Dendritic cell treated with granulocyte-macrophage colony-stimulating factor and Interleukin-4, amounts not matched to agents 40 ng/mL and 50 ng/mL, for 4 days (primary cell): ENCODE measurements at regions of chr1 and their contacts with region 1.

Region 1: DNA sequence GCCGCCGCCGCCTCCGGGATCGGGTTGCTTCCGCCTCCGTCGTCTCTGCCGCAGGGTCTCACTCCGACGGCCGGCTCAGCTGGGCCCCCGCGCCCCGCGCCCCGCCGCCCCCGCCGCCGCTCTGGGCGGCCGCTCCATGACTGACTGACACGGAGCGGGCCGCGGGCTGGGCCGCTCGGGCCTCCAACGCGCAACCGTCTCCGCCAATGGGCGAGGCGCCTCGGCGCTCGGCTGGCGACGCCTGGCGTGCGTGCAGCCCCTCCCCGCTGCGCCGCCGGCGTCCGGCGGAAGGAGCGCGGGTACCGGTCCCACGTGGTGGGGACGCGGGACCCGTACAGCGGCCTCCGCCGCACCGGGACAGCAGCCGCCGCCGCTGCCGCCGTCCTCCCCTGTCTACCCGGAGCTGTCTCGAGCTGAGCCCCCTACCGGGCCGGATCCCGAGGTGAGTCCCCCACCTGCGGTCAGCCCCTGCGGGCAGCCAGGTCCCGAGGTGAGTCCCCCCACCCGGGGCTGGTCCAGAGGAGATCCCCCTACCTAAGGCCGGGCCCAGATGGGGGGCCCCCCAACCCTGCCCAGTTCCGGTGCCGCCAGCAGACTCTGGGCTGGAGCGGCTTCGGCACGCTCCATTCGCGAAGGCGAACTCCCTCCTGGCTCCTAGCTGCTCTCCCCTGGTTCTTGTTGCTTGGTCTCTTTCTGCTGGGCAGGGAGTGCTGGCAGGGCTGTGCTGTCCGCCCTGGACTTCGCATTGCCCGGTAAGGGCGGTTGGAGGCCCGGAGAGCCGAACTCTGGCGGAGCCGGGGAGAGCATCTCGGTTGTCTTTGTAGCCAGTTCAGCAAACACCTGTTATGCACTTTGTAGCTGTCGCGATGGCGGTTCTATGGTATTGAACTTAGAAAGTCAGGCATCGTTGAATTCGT is at the starts of genes TAF5L and URB2:
- H3K4me3 Mint-ChIP-seq: peak within 1 kb of the TSS; percentile 99
- H3K27ac Mint-ChIP-seq: peak within 1 kb of the TSS; percentile 83
- H3K4me1 Mint-ChIP-seq: peaks cover 41% of the 10 kb centered on the region
- H3K27me3 Mint-ChIP-seq: no peaks in the 10 kb centered on the region

Region 2: DNA sequence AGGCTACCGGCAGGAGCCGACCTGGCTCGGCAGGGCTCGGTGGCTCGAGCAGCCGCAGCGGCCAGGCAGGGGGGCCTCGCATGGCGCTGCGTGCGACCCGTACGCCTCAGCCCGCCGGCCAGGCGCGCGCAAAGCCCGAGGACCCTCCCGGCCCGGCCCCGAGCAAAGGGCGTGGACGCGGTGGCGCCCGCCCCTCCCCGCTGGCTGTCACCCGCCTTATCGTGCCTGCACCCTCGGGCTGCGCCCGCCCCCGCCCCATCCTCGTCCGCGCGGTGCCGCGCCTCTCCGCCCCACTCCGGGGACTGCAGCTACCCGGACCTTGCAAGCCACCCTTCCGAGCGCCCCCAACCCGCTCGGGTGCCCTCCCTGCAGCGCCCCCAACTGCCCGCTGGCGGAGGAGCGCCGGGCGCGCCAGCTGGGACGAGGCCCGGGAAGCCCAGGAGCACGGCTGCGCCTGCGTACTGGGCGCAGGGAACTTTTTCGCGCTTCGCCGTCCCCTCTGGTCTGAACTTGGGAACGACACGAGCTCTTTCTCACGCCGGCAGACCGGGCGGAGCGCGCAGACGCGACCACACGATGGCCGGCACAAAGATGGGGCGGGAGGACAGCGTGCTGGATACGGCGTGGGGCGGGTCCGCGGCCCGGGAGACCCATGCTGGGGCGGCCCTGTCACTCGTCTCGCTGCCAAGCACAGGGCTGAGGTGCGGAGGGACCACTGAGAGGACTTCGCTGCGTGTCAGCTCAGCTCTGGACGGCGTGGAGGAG is 67.4 kb before region 1 on chr1 and contains the start of gene ABCB10:
- intact Hi-C with region 1: loop called (anchors 1 kb)
- H3K4me3 Mint-ChIP-seq: peak within 1 kb of the TSS; percentile 95
- H3K27ac Mint-ChIP-seq: peak within 1 kb of the TSS; percentile 86
- H3K4me1 Mint-ChIP-seq: peaks cover 46% of the 10 kb centered on the region
- H3K27me3 Mint-ChIP-seq: no peaks in the 10 kb centered on the region

Region 3: DNA sequence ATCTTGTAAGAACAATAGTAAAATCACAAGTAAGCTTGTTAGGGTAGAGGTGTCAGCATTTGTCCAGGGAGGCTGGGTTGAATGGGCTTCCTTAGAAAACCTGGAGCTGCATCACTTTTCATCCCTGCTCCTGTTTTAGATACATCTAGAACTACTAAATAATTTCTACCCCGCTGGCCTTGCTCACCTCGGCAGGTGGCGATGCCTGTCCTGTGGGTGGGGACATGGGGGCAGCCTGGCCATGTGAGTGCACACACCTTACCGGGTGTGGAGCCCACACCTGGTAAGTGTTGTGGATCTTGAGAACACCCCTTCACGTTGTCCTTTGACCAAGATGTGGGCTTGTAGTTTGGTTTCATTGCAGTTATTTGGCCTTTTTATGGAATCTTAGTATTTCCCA is 29.6 kb after region 1 on chr1:
- intact Hi-C with region 1: no loop called
- H3K4me3 Mint-ChIP-seq: no peak overlapping the region
- H3K27ac Mint-ChIP-seq: no peak overlapping the region
- H3K4me1 Mint-ChIP-seq: no peaks in the 10 kb centered on the region
- H3K27me3 Mint-ChIP-seq: no peaks in the 10 kb centered on the region

Region 4: DNA sequence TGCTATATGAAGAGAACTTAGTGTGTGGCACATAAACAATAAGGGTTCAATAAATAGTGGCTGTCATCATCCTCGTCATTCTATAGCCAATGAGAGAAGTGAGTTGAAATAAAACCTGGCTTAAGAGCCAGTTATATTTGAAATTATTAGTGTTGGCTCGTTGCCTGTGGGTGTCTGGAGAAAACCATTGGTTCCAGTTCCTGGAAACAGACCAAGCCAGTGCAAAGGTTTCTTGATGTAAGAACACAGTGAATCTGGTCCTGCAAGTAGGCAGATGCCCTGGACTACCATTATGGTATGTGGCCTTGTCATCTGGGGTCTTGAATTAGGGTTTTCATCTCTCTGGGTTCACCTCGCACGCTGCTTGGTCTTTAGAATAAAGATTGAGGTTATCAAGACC is 43.2 kb after region 1 on chr1:
- intact Hi-C with region 1: no loop called
- H3K4me3 Mint-ChIP-seq: no peak overlapping the region
- H3K27ac Mint-ChIP-seq: no peak overlapping the region
- H3K4me1 Mint-ChIP-seq: no peaks in the 10 kb centered on the region
- H3K27me3 Mint-ChIP-seq: peaks cover 2% of the 10 kb centered on the region